ENCODE measurements at regions of chr12 and their contacts with region 1.

Region 1: GRCh38 chr12:107131832-107132616 is 38.7 kb upstream of the CRY1 start:
- DNase-seq: peak in 4 of 9 experiments; percentile 17 to 65 (median 52)
- ATAC-seq: peak; percentile 51
- H3K4me3 ChIP-seq: no peak overlapping the region
- H3K4me3 Mint-ChIP-seq: no peak overlapping the region
- H3K27ac ChIP-seq: no peak overlapping the region
- H3K27ac Mint-ChIP-seq: no peak overlapping the region
- H3K4me1 ChIP-seq: no peaks in the 10 kb centered on the region
- H3K4me1 Mint-ChIP-seq: peaks cover 4% of the 10 kb centered on the region
- H3K27me3 ChIP-seq: no peaks in the 10 kb centered on the region
- H3K27me3 Mint-ChIP-seq: no peaks in the 10 kb centered on the region
- CTCF ChIP-seq: peak; percentile 79

Region 2: DNA sequence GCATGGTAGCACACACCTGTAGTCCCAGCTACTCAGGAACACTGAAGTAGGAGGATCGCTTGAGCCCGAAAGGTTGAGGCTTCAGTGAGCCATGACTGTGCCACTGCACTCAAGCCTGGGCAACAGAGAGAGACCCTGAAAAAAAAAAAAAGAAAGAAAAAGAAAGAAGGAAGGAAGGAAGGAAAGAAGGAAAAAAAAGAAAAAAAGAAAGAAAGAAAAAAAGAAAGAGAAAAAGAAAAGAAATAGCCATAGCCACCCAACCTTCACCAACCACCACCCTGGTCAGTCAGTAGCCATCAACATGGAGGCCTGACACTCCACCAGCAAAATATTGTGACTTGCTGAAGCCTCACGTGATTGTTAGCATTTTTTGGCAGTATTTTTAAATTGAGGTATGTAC is 197.7 kb before region 1 on chr12:
- CTCF ChIA-PET with region 1: no interaction called
- POLR2A ChIA-PET with region 1: no interaction called
- intact Hi-C with region 1: no loop called
- DNase-seq: no peak
- ATAC-seq: no peak
- H3K4me3 ChIP-seq: no peak overlapping the region
- H3K4me3 Mint-ChIP-seq: no peak overlapping the region
- H3K27ac ChIP-seq: no peak overlapping the region
- H3K27ac Mint-ChIP-seq: no peak overlapping the region
- H3K4me1 ChIP-seq: no peaks in the 10 kb centered on the region
- H3K4me1 Mint-ChIP-seq: no peaks in the 10 kb centered on the region
- H3K27me3 ChIP-seq: no peaks in the 10 kb centered on the region
- H3K27me3 Mint-ChIP-seq: peaks cover 19% of the 10 kb centered on the region
- CTCF ChIP-seq: no peak

Region 3: DNA sequence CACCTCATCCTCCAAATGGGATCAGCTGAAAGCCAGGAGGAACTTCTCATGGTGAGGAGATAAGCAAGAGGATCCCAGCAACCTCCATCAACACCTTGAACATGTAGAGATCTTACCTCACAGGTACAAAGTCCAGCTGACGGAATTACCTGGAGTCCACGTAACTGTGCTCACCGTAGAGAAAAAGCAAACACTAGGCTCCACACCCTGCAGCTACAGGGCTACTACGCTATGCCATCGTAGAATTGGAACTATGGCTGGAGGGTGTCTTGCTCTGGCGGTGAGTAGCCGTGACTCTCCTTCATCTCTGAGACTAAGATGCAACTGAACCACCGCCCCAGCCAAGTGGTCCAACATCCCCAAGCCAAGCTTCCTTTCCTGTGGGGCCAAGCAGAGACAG is 89.2 kb before region 1 on chr12:
- CTCF ChIA-PET with region 1: no interaction called
- POLR2A ChIA-PET with region 1: no interaction called
- intact Hi-C with region 1: no loop called
- DNase-seq: no peak
- ATAC-seq: no peak
- H3K4me3 ChIP-seq: no peak overlapping the region
- H3K4me3 Mint-ChIP-seq: no peak overlapping the region
- H3K27ac ChIP-seq: no peak overlapping the region
- H3K27ac Mint-ChIP-seq: no peak overlapping the region
- H3K4me1 ChIP-seq: no peaks in the 10 kb centered on the region
- H3K4me1 Mint-ChIP-seq: peaks cover 16% of the 10 kb centered on the region
- H3K27me3 ChIP-seq: no peaks in the 10 kb centered on the region
- H3K27me3 Mint-ChIP-seq: no peaks in the 10 kb centered on the region
- CTCF ChIP-seq: no peak

Region 4: DNA sequence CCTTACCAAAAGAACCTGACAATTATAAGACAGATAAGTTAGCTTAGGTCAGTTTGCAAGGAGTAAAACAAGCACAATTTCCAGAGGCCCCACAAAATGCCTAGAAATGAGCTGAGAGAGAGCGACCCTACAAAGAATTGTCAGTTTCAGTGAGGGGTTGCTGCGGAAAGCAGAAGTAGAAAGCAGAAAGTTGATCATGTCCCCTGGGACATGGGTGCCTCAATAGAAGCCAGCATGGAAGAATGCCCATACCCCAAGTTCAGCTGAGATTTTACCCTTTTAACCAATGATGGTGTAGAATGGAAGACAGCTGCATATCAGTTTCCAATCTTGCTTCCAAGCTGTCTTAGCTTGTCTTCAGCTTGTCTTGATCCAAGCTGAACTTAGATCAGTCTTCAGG is 16.9 kb before region 1 on chr12:
- CTCF ChIA-PET with region 1: interaction called, 31 read pairs
- POLR2A ChIA-PET with region 1: no interaction called
- intact Hi-C with region 1: no loop called
- DNase-seq: no peak
- ATAC-seq: no peak
- H3K4me3 ChIP-seq: no peak overlapping the region
- H3K4me3 Mint-ChIP-seq: no peak overlapping the region
- H3K27ac ChIP-seq: no peak overlapping the region
- H3K27ac Mint-ChIP-seq: no peak overlapping the region
- H3K4me1 ChIP-seq: no peaks in the 10 kb centered on the region
- H3K4me1 Mint-ChIP-seq: no peaks in the 10 kb centered on the region
- H3K27me3 ChIP-seq: no peaks in the 10 kb centered on the region
- H3K27me3 Mint-ChIP-seq: peaks cover 19% of the 10 kb centered on the region
- CTCF ChIP-seq: no peak

Region 5: GRCh38 chr12:107317751-107318613 is 186.0 kb after region 1 on chr12:
- CTCF ChIA-PET with region 1: interaction called, 11 read pairs
- POLR2A ChIA-PET with region 1: no interaction called
- intact Hi-C with region 1: loop called (anchors 2 to 5 kb)
- DNase-seq: peak; percentile 69 to 93 (median 86)
- ATAC-seq: peak; percentile 53
- H3K4me3 ChIP-seq: peak overlapping the region; percentile 69 to 74
- H3K4me3 Mint-ChIP-seq: peak overlapping the region; percentile 87
- H3K27ac ChIP-seq: peak overlapping the region; percentile 23 to 81
- H3K27ac Mint-ChIP-seq: peak overlapping the region; percentile 49
- H3K4me1 ChIP-seq: peaks cover 23% of the 10 kb centered on the region
- H3K4me1 Mint-ChIP-seq: peaks cover 36% of the 10 kb centered on the region
- H3K27me3 ChIP-seq: no peaks in the 10 kb centered on the region
- H3K27me3 Mint-ChIP-seq: no peaks in the 10 kb centered on the region
- CTCF ChIP-seq: peak; percentile 48

Region 6: DNA sequence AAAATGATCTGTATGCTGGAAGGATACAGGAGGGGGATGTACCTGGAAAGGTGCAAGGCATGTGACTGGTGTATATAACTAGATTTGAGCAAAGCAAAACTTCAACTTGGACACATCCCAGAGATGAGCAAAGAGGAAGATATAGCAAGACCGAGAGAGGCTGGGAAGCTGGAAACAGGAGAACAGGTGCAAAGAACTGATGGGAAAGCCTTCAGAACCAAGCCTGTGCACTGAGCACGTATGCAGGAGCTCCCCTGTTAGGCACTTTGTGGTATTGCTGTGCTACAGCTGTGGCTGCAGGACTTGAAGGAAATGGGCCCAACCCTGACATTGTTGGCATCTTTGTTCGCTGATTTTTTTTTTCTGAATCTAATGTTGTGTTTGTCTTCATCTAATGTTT is 432.9 kb after region 1 on chr12:
- CTCF ChIA-PET with region 1: interaction called, 12 read pairs
- POLR2A ChIA-PET with region 1: no interaction called
- intact Hi-C with region 1: no loop called
- DNase-seq: peak in 2 of 9 experiments; percentile 13 to 45
- ATAC-seq: peak; percentile 46
- H3K4me3 ChIP-seq: no peak overlapping the region
- H3K4me3 Mint-ChIP-seq: no peak overlapping the region
- H3K27ac ChIP-seq: no peak overlapping the region
- H3K27ac Mint-ChIP-seq: no peak overlapping the region
- H3K4me1 ChIP-seq: no peaks in the 10 kb centered on the region
- H3K4me1 Mint-ChIP-seq: peaks cover 15% of the 10 kb centered on the region
- H3K27me3 ChIP-seq: no peaks in the 10 kb centered on the region
- H3K27me3 Mint-ChIP-seq: no peaks in the 10 kb centered on the region
- CTCF ChIP-seq: peak; percentile 36

Region 7: GRCh38 chr12:107607464-107608392 is 475.7 kb after region 1 on chr12:
- CTCF ChIA-PET with region 1: interaction called, 394 read pairs
- POLR2A ChIA-PET with region 1: no interaction called
- intact Hi-C with region 1: loop called (anchors 1 kb)
- DNase-seq: peak; percentile 57 to 89 (median 83)
- ATAC-seq: peak; percentile 84
- H3K4me3 ChIP-seq: no peak overlapping the region
- H3K4me3 Mint-ChIP-seq: no peak overlapping the region
- H3K27ac ChIP-seq: no peak overlapping the region
- H3K27ac Mint-ChIP-seq: no peak overlapping the region
- H3K4me1 ChIP-seq: no peaks in the 10 kb centered on the region
- H3K4me1 Mint-ChIP-seq: no peaks in the 10 kb centered on the region
- H3K27me3 ChIP-seq: no peaks in the 10 kb centered on the region
- H3K27me3 Mint-ChIP-seq: no peaks in the 10 kb centered on the region
- CTCF ChIP-seq: peak; percentile 94

Region 8: GRCh38 chr12:108193917-108194316 is 1061.9 kb after region 1 on chr12:
- CTCF ChIA-PET with region 1: no interaction called
- POLR2A ChIA-PET with region 1: no interaction called
- intact Hi-C with region 1: loop called in 1 of 2 experiments (anchors 5 kb)
- DNase-seq: peak in 5 of 9 experiments; percentile 7 to 32 (median 17)
- ATAC-seq: no peak
- H3K4me3 ChIP-seq: no peak overlapping the region
- H3K4me3 Mint-ChIP-seq: no peak overlapping the region
- H3K27ac ChIP-seq: no peak overlapping the region
- H3K27ac Mint-ChIP-seq: no peak overlapping the region
- H3K4me1 ChIP-seq: no peaks in the 10 kb centered on the region
- H3K4me1 Mint-ChIP-seq: no peaks in the 10 kb centered on the region
- H3K27me3 ChIP-seq: no peaks in the 10 kb centered on the region
- H3K27me3 Mint-ChIP-seq: peaks cover 17% of the 10 kb centered on the region
- CTCF ChIP-seq: peak; percentile 57